Spleen (tissue), 13 donors: ENCODE measurements at regions of chr17 and their contacts with region 1.

Region 1: GRCh38 chr17:1628856-1629646 is 417 bp upstream of the SLC43A2 start:
- DNase-seq: peak; percentile 97
- H3K4me3 ChIP-seq: peak overlapping the region; percentile 76 to 99 (median 88)
- H3K27ac ChIP-seq: peak overlapping the region; percentile 82 to 99 (median 96)
- H3K4me1 ChIP-seq: peaks cover 15 to 70% (median 56%) of the 10 kb centered on the region in 6 donors
- H3K27me3 ChIP-seq: no peaks in the 10 kb centered on the region
- CTCF ChIP-seq: peak in 7 of 11 experiments; percentile 33 to 70 (median 66)
- POLR2A ChIP-seq: no peak

Region 2: GRCh38 chr17:1561400-1562175 is 67.5 kb before region 1 on chr17:
- intact Hi-C with region 1: loop called (anchors 5 kb)
- DNase-seq: peak; percentile 88
- H3K4me3 ChIP-seq: peak overlapping the region; percentile 66 to 97 (median 77)
- H3K27ac ChIP-seq: peak overlapping the region; percentile 66 to 96 (median 86)
- H3K4me1 ChIP-seq: peaks cover 17 to 79% (median 62%) of the 10 kb centered on the region in 6 donors
- H3K27me3 ChIP-seq: no peaks in the 10 kb centered on the region
- CTCF ChIP-seq: peak in 5 of 11 experiments; percentile 15 to 55 (median 38)
- POLR2A ChIP-seq: no peak

Region 3: DNA sequence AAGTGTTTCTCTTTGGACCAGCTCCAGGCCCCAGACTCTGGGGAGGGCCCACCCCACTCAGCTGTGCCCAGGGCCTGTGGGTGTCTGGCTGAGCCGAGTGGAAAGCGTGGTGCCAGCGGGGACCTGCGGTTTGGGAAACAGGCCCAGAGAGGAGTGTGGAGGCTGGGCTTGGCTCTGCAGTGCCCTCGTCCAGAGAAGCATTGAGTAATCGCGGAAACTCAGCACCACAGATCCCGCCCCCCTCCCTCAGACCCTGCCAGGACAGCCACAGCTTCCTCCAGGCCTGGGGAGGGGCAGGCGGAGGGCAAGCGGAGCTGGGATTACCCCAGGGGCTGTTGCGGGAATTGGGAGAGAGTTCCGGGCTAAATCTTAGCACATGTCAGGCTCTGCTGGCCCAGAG is 51.9 kb before region 1 on chr17:
- intact Hi-C with region 1: loop called (anchors 5 kb)
- DNase-seq: peak; percentile 93
- H3K4me3 ChIP-seq: peak overlapping the region in 2 of 8 donors; percentile 1 to 56
- H3K27ac ChIP-seq: peak overlapping the region; percentile 46 to 93 (median 92)
- H3K4me1 ChIP-seq: peaks cover 40 to 67% (median 52%) of the 10 kb centered on the region in 6 donors
- H3K27me3 ChIP-seq: no peaks in the 10 kb centered on the region
- CTCF ChIP-seq: peak in 3 of 11 experiments; percentile 18 to 41 (median 34)
- POLR2A ChIP-seq: peak in 1 of 3 donors; percentile 15